Activated CD8-positive, alpha-beta T cell treated with anti-CD3 and anti-CD28 coated beads, Interleukin-2, amount 10 ng/mL, durations not matched to agents 7 days and 5 days (primary cell): ENCODE measurements at regions of chr1 and their contacts with region 1.

Region 1: GRCh38 chr1:36223993-36224536 is at the start of gene THRAP3:
- DNase-seq: peak; percentile 100
- ATAC-seq: peak; percentile 93
- H3K4me3 Mint-ChIP-seq: peak within 1 kb of the TSS; percentile 97
- H3K27ac Mint-ChIP-seq: peak within 1 kb of the TSS; percentile 100
- H3K4me1 Mint-ChIP-seq: peaks cover 32% of the 10 kb centered on the region
- H3K27me3 Mint-ChIP-seq: no peaks in the 10 kb centered on the region
- total RNA-seq, gene THRAP3: 136 to 140 TPM

Region 2: GRCh38 chr1:36155408-36156328 is 68.4 kb before region 1 on chr1 and contains the start of gene MAP7D1:
- CTCF ChIA-PET with region 1: interaction called, 52 read pairs
- POLR2A ChIA-PET with region 1: interaction called, 50 read pairs
- DNase-seq: peak; percentile 85
- ATAC-seq: peak; percentile 72
- H3K4me3 Mint-ChIP-seq: peak within 1 kb of the TSS; percentile 92
- H3K27ac Mint-ChIP-seq: peak within 1 kb of the TSS; percentile 94
- H3K4me1 Mint-ChIP-seq: peaks cover 74% of the 10 kb centered on the region
- H3K27me3 Mint-ChIP-seq: no peaks in the 10 kb centered on the region
- total RNA-seq, gene MAP7D1: 235 to 245 TPM

Region 3: DNA sequence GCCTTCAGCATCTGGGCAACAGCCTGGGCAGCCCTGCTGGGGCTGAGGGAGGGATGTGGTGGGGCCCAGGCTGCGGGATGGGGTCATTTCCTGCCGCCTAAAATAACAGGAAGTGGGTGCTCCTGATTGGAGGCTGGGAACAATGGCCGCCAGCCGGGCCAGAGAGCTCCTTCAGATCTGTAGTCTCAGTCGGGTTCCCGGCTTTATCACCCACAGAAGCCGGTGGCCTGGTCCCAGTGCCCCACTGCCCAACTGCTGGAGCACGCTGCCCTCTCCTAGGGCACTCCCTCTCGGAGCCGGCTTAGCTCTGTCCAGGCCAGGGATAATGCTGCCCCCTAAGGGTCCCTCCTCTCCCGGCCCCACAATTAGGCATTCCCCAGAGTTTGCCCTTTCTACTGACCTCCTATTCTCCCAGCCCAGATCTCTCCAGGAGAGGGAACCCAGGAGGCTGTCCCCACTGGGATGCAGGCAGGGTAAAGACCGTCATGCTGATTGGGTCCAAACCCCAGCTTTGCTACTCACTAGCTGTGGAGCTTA is 63.0 kb before region 1 on chr1:
- CTCF ChIA-PET with region 1: interaction called, 7 read pairs
- POLR2A ChIA-PET with region 1: interaction called, 50 read pairs
- DNase-seq: peak; percentile 84
- ATAC-seq: peak; percentile 43
- H3K4me3 Mint-ChIP-seq: peak overlapping the region; percentile 72
- H3K27ac Mint-ChIP-seq: peak overlapping the region; percentile 89
- H3K4me1 Mint-ChIP-seq: peaks cover 68% of the 10 kb centered on the region
- H3K27me3 Mint-ChIP-seq: no peaks in the 10 kb centered on the region

Region 4: GRCh38 chr1:36239941-36240637 is 16.0 kb after region 1 on chr1:
- CTCF ChIA-PET with region 1: interaction called, 4 read pairs
- POLR2A ChIA-PET with region 1: interaction called, 12 read pairs
- DNase-seq: no peak
- ATAC-seq: no peak
- H3K4me3 Mint-ChIP-seq: no peak overlapping the region
- H3K27ac Mint-ChIP-seq: no peak overlapping the region
- H3K4me1 Mint-ChIP-seq: peaks cover 16% of the 10 kb centered on the region
- H3K27me3 Mint-ChIP-seq: no peaks in the 10 kb centered on the region